ENCODE measurements at regions of chr12 and their contacts with region 1.

Region 1: GRCh38 chr12:122471324-122472226 is 29.2 kb downstream of the ZCCHC8 start:
- DNase-seq: peak in 1 of 2 donors; percentile 83
- ATAC-seq: peak; percentile 73 to 84 (median 83)
- H3K4me3 ChIP-seq: no peak overlapping the region
- H3K4me3 Mint-ChIP-seq: peak overlapping the region; percentile 4
- H3K27ac ChIP-seq: no peak overlapping the region
- H3K27ac Mint-ChIP-seq: peak overlapping the region; percentile 47 to 61
- H3K4me1 ChIP-seq: no peaks in the 10 kb centered on the region
- H3K4me1 Mint-ChIP-seq: peaks cover 7 to 8% of the 10 kb centered on the region in 2 donors
- H3K27me3 ChIP-seq: no peaks in the 10 kb centered on the region
- H3K27me3 Mint-ChIP-seq: no peaks in the 10 kb centered on the region
- CTCF ChIP-seq: peak; percentile 93

Region 2: DNA sequence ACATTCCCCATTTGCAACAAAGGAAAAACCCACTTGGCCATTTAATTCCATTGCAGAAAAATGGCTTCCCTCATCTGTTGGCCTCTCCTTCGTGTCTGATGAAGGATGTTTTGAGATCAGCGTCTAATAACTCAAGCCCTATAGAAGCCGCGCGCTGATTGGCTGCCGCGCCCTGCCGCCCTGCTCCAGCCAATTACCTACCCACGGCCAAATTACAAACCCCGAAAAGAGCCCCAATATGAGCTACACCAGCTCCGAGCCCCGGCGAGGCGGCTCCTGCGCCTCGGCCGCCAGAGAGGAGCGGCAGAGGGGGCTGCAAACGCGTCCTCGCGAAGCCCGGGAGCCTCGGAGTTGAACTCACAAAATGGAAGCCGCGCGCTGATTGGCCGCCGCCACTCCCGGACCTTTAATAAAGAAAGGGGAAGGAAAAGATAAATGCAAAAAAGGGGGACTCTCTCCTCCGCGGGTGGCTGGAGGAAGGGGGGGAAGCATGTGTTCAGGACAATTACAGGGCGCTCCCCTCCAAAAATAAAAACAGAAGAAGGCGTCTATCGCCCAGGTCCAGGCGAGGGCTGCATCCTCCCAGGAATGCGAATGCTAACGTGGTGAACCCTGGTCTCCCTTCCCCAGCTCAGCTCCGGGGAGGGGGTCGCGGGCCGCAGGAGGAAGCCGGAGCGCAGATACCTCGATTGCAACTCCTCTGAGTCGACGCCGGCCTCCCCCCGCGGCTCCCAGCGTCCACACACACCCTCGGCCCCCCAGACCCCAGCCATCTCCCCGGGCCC is 668.5 kb before region 1 on chr12:
- intact Hi-C with region 1: no loop called
- DNase-seq: peak; percentile 85 to 94
- ATAC-seq: peak; percentile 52 to 69 (median 59)
- H3K4me3 ChIP-seq: peak overlapping the region; percentile 57
- H3K4me3 Mint-ChIP-seq: peak overlapping the region; percentile 100
- H3K27ac ChIP-seq: peak overlapping the region; percentile 97
- H3K27ac Mint-ChIP-seq: peak overlapping the region; percentile 100
- H3K4me1 ChIP-seq: peaks cover 60% of the 10 kb centered on the region
- H3K4me1 Mint-ChIP-seq: peaks cover 44 to 59% of the 10 kb centered on the region in 2 donors
- H3K27me3 ChIP-seq: no peaks in the 10 kb centered on the region
- H3K27me3 Mint-ChIP-seq: no peaks in the 10 kb centered on the region
- CTCF ChIP-seq: no peak

Region 3: DNA sequence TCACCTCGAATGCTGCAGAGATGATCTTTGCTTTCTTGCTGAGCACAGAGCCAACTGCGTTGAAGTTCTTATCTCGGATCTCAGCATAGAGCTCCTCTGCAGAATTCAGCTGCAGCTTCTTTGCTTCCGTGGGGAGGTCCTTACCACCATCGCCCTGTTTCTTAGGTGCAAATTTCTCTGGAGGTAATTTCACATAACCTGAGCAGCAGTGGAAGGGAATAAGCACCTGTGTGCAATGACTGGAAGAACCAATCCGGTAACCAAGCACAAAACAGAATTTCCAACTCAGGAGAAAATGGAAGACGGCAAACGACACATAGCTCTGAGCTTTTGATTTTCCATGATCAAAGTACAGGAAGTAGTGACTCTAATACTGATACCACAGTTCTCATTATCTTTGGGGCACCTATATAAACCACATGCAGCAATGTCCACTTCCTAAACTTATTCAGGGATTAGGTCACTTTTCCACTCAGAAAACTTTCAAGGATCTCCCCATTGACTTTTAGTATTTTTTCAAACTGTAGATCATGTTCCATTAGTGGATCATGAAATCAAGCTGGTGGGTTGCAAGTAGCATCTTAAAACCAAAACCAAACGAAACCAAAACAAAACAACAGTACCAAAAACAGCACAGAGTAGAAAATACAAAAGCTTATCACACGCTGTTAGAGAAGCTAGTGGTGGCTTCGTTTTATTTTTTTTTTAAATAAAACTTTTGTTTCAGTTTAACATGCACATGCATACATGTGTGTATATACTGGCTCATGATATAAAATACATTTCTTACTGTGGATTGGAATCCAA is 226.8 kb before region 1 on chr12:
- intact Hi-C with region 1: no loop called
- DNase-seq: peak in 1 of 2 donors; percentile 63
- ATAC-seq: peak in 1 of 3 donors; percentile 39
- H3K4me3 ChIP-seq: peak overlapping the region; percentile 0
- H3K4me3 Mint-ChIP-seq: peak overlapping the region; percentile 1
- H3K27ac ChIP-seq: peak overlapping the region; percentile 37
- H3K27ac Mint-ChIP-seq: peak overlapping the region in 1 of 2 donors; percentile 6
- H3K4me1 ChIP-seq: no peaks in the 10 kb centered on the region
- H3K4me1 Mint-ChIP-seq: peaks cover 0 to 6% of the 10 kb centered on the region in 2 donors
- H3K27me3 ChIP-seq: no peaks in the 10 kb centered on the region
- H3K27me3 Mint-ChIP-seq: no peaks in the 10 kb centered on the region
- CTCF ChIP-seq: no peak

Region 4: DNA sequence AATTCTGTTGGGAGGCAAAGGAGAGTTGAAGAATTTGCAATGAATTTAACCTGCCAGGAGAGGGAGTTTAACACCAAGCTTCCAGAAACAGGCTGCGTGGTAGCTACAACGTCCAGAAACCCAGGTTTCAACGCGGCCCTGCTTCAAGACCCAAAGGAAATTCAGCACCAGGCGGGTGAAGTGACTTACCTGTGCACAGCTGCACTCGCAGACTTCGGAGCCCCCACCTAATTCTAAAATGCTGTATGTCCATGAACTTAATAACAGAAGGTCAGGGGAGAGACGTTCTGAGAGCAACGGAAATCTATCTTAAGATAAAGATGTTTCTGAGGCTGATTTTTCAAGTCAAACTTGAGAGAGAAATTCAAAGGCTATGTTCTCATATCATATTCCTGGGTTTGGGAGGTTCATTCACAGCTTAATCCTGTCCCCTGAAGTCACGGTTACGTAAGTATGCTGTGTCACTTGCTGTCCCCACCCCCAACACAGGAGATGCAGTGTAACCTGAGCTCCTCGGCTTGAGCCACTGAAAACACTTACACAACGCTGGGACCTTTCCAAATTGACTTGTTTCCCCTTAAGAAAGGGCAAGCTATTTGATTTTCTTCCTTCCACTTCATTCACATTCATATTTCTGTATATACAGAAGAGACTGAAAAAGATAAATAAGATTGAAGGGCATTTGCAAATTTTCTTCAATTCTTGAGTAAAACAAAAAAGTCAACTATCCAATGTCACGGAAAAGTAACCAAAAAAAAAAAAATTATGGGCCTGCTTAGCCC is 71.8 kb before region 1 on chr12:
- intact Hi-C with region 1: loop called (anchors 1 kb)
- DNase-seq: peak; percentile 31 to 83
- ATAC-seq: peak; percentile 68 to 90 (median 81)
- H3K4me3 ChIP-seq: no peak overlapping the region
- H3K4me3 Mint-ChIP-seq: peak overlapping the region; percentile 21
- H3K27ac ChIP-seq: no peak overlapping the region
- H3K27ac Mint-ChIP-seq: peak overlapping the region; percentile 67 to 82
- H3K4me1 ChIP-seq: peaks cover 11% of the 10 kb centered on the region
- H3K4me1 Mint-ChIP-seq: peaks cover 15 to 23% of the 10 kb centered on the region in 2 donors
- H3K27me3 ChIP-seq: no peaks in the 10 kb centered on the region
- H3K27me3 Mint-ChIP-seq: no peaks in the 10 kb centered on the region
- CTCF ChIP-seq: peak; percentile 65